Endothelial cell of umbilical vein (primary cell): ENCODE measurements at regions of chr15 and their contacts with region 1.

Region 1: DNA sequence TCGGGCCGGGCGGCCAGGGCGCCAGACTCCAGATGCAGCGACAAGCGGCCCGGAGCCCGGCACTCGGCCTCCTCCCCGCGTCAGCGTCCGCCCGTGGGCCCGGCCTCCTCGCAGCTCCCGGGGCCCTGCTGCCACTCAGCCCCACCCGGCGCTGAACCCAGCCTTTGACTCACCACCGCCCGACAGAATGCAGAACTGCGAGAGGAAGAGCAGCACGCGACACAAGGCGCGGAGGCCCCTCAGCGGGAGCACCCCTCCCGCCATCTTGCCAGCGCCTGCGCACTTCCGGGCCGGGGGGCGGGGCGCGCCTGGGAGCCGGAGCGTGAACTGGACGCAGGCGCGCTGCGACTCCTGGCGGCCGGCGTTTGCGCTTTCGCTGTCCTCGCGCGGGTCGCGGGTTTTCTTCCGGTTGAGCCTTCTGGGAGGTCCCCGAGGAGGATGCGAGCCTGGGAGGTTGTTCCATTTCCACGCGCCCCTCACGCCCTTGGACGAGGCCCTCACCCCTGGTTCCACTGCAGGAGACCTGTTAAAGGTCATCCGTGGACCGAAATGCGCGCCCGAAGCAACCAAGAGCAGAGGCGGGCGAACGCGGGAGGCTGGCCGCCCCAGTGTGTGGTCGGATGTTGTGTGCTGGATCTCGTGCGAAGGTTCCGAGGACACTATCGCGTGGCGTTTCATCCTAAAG is at the start of gene TM2D3:
- DNase-seq: peak; percentile 93
- H3K4me3 ChIP-seq: peak within 1 kb of the TSS; percentile 19 to 78 (median 60)
- H3K27ac ChIP-seq: peak within 1 kb of the TSS; percentile 74
- H3K4me1 ChIP-seq: peaks cover 19% of the 10 kb centered on the region
- H3K27me3 ChIP-seq: no peaks in the 10 kb centered on the region
- CTCF ChIP-seq: peak; percentile 81 to 83
- POLR2A ChIP-seq: peak; percentile 91
- total RNA-seq, gene TM2D3: 34.3 and 36.7 TPM in 2 replicates

Region 2: DNA sequence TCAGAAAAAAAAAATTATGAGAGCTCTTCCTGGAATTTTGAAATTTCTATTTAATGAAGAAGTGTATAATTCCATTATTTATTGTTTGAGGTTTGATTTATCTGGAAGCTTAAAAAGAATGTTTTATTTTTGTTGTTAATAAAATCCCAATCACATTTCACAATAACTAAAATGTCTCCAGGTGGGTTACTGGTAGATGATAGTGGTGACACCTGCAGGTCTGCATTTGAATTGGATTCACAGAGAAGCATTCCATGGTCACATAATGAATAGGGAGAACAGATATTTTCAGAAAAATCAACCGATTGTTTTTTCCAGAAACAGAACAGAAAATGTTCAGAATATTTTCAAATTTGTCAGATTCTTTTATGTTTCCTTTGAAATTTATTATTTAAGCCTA is 1001.6 kb before region 1 on chr15:
- CTCF ChIA-PET with region 1: no interaction called
- POLR2A ChIA-PET with region 1: no interaction called
- dilution Hi-C with region 1: no loop called
- intact Hi-C with region 1: no loop called
- DNase-seq: no peak
- H3K4me3 ChIP-seq: no peak overlapping the region
- H3K27ac ChIP-seq: no peak overlapping the region
- H3K4me1 ChIP-seq: no peaks in the 10 kb centered on the region
- H3K27me3 ChIP-seq: no peaks in the 10 kb centered on the region
- CTCF ChIP-seq: no peak
- POLR2A ChIP-seq: no peak

Region 3: GRCh38 chr15:101294731-101295606 is 357.3 kb before region 1 on chr15 and contains the start of gene SNRPA1:
- CTCF ChIA-PET with region 1: interaction called, 3 read pairs
- POLR2A ChIA-PET with region 1: no interaction called
- dilution Hi-C with region 1: no loop called
- intact Hi-C with region 1: loop called (anchors 1 kb)
- DNase-seq: peak; percentile 95
- H3K4me3 ChIP-seq: peak within 1 kb of the TSS; percentile 77 to 94 (median 80)
- H3K27ac ChIP-seq: peak within 1 kb of the TSS; percentile 70
- H3K4me1 ChIP-seq: peaks cover 14% of the 10 kb centered on the region
- H3K27me3 ChIP-seq: no peaks in the 10 kb centered on the region
- CTCF ChIP-seq: no peak
- POLR2A ChIP-seq: peak; percentile 53
- total RNA-seq, gene SNRPA1: 80.8 and 82.7 TPM in 2 replicates

Region 4: DNA sequence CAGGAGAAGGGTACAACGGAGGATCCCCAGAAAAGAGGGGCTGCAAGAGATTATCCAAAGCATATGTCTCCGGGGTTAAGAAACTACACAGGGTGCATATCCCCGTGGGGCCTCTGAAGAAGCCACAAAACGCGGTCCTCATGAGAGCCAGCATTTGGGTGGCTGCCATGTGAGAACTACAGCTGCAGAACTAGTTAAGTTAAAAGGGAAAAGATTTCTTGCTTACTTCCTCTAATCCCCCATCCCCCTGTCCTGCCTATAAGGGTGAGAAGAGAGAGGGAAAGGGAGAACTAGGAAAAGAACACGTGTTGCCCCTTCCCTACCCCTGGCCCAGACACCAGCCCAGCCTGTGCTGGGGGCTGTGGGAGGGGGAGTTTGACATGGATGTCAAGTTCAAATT is 92.3 kb before region 1 on chr15:
- CTCF ChIA-PET with region 1: no interaction called
- POLR2A ChIA-PET with region 1: no interaction called
- dilution Hi-C with region 1: no loop called
- intact Hi-C with region 1: no loop called
- DNase-seq: no peak
- H3K4me3 ChIP-seq: no peak overlapping the region
- H3K27ac ChIP-seq: no peak overlapping the region
- H3K4me1 ChIP-seq: no peaks in the 10 kb centered on the region
- H3K27me3 ChIP-seq: no peaks in the 10 kb centered on the region
- CTCF ChIP-seq: no peak
- POLR2A ChIP-seq: no peak